Calu3 (cell line): ENCODE measurements at regions of chr3 and their contacts with region 1.

Region 1: DNA sequence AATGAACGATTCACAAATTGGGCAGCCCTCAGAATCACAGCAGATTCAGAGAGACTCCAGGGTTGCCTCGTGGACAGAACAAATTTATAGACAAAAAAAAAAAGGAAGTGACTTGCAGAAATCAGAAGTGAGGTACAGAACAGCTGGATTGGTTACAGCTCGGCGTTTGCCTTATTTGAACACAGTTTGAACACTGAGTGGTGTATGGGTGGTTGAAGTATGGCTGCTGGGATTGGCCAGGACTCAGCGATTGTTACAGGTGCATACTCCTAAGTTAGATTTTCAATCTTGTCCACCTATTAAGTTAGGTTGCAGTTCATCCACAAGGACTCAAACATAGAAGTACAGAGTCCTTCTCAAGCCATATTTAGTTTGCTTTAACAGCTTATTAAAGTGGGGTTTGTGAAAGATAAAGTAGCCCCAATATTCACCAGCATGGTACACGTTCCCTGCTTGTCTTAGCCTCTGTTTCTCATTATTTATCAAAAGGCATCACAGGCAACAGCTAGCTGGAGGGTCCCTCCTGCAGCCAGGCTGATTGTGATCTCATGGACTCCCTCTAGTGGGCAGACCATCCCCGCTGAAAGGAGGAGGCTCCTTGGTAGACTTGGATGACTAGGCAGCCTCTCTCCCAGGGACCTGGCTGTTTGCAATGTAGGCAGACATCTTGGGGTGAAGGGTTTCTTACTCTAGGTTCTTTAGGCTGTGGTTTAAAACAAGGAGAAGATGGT is 17.6 kb upstream of the ALDH1L1 start:
- DNase-seq: peak; percentile 89
- H3K4me3 Mint-ChIP-seq: no peak overlapping the region
- H3K27ac Mint-ChIP-seq: no peak overlapping the region
- H3K4me1 Mint-ChIP-seq: peaks cover 15% of the 10 kb centered on the region
- H3K27me3 Mint-ChIP-seq: no peaks in the 10 kb centered on the region
- CTCF ChIP-seq: peak; percentile 80

Region 2: DNA sequence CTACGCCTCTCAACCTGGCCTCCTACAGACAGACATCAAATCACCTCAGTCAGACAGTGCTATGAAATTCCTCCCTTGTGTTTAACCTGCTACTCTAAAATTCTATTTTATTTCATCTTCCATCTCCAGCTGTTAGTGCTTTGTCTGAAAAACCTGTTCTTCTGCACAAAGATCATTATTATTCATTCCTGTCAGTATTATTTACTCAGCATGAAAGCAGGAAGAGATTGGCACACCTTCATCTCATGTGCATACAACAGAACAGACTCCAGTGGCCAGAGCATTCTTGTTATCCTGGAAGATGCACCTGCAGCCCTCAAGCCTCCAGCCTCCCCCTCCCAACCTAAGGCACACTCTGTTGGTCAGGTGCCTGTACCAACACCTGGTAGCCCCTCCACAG is 230.9 kb before region 1 on chr3:
- CTCF ChIA-PET with region 1: no interaction called
- intact Hi-C with region 1: loop called (anchors 10 kb)
- DNase-seq: no peak
- H3K4me3 Mint-ChIP-seq: no peak overlapping the region
- H3K27ac Mint-ChIP-seq: no peak overlapping the region
- H3K4me1 Mint-ChIP-seq: no peaks in the 10 kb centered on the region
- H3K27me3 Mint-ChIP-seq: peaks cover 15% of the 10 kb centered on the region
- CTCF ChIP-seq: no peak

Region 3: GRCh38 chr3:126314790-126315658 is 117.0 kb after region 1 on chr3:
- CTCF ChIA-PET with region 1: no interaction called
- intact Hi-C with region 1: no loop called
- DNase-seq: no peak
- H3K4me3 Mint-ChIP-seq: no peak overlapping the region
- H3K27ac Mint-ChIP-seq: no peak overlapping the region
- H3K4me1 Mint-ChIP-seq: no peaks in the 10 kb centered on the region
- H3K27me3 Mint-ChIP-seq: peaks cover 47% of the 10 kb centered on the region
- CTCF ChIP-seq: no peak

Region 4: DNA sequence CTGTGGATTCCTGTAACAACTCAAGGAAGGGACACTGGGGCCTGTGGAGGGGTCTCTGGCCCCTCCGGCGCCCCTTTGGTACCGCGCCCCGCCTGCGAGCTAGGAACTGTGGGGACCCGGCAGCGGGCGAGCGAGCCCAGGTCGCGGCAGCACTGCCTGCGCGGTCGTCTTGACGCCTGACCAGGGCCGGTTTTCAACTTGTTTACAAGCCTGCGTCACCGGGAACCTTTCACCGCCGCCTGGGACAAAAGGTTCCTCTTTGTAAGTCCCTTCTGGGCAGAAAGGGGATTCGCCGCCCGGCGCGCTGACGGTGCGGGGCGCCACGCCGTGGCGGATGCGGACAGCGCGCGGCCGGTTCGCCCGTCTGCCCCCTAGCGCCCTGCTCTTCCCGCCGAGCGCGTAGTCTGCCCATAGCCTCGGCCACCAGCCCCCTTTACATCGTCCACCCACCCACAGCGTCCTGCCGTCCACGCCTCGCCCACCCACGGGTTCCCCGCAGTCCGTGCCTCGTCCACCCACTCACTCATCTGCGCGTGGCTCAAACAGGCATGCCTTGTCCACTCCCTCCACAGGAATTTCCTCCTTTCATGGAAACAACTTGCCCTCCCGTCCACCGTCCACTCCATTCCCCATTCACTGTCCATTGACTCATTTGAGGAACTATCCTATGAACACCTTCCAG is 191.2 kb after region 1 on chr3:
- CTCF ChIA-PET with region 1: interaction called, 3 read pairs
- intact Hi-C with region 1: loop called (anchors 1 kb)
- DNase-seq: peak; percentile 96
- H3K4me3 Mint-ChIP-seq: peak overlapping the region; percentile 71
- H3K27ac Mint-ChIP-seq: peak overlapping the region; percentile 90
- H3K4me1 Mint-ChIP-seq: peaks cover 18% of the 10 kb centered on the region
- H3K27me3 Mint-ChIP-seq: peaks cover 48% of the 10 kb centered on the region
- CTCF ChIP-seq: peak; percentile 98

Region 5: GRCh38 chr3:126442094-126442855 is 244.3 kb after region 1 on chr3:
- CTCF ChIA-PET with region 1: no interaction called
- intact Hi-C with region 1: no loop called
- DNase-seq: no peak
- H3K4me3 Mint-ChIP-seq: no peak overlapping the region
- H3K27ac Mint-ChIP-seq: no peak overlapping the region
- H3K4me1 Mint-ChIP-seq: peaks cover 10% of the 10 kb centered on the region
- H3K27me3 Mint-ChIP-seq: no peaks in the 10 kb centered on the region
- CTCF ChIP-seq: no peak

Region 6: DNA sequence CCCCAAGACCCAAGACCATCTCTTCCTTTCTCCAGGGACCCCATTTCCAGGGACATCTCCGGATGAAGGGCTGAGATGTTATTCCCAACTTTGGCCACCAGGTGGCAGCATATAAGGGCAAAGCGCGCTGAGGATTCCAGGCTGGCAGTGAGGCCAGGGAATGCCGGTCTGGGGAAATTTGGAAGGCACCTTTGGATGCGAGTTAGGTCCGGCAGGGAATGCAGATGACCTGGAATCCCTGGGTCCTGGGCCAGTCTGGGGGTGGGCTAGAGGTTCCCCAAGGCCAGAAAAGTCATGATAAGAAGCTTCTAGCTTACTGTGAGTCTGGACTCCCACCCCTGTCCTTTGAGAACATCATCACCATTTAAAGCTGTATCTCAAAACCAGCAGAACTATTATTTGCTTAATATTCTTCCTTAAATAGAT is 324.4 kb after region 1 on chr3:
- CTCF ChIA-PET with region 1: no interaction called
- intact Hi-C with region 1: no loop called
- DNase-seq: peak; percentile 82
- H3K4me3 Mint-ChIP-seq: no peak overlapping the region
- H3K27ac Mint-ChIP-seq: no peak overlapping the region
- H3K4me1 Mint-ChIP-seq: no peaks in the 10 kb centered on the region
- H3K27me3 Mint-ChIP-seq: peaks cover 80% of the 10 kb centered on the region
- CTCF ChIP-seq: peak; percentile 98

Region 7: DNA sequence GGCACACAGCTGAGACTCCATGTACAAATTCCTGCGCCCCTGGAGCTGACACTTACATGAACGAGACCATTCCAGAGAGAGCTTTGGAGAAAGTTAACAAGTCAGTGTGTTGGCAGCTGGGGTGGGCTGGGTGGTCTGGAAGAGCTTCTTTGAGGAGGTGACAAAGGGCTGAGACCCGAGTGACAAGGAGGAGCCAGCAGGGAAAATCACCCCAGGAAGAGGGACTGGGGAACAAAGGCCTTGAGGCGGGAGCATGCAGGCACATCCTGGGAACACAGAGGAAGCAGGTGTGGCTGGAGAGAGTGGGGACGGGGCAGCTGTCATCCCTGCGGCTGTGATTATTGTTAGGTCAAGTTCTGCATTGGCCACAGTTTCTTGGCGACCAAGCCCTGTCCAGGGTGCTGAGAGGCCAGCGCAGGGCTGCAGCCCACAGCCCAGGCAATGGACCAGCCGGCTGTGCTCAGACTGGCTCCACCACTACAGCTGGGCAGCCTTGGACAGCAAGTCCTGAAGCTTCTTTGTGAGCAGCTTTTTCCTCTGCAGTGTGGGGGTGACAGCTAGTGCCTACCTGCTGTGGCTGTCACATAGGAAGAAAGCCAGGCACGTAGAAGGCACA is 960.7 kb after region 1 on chr3:
- CTCF ChIA-PET with region 1: no interaction called
- intact Hi-C with region 1: no loop called
- DNase-seq: peak; percentile 64
- H3K4me3 Mint-ChIP-seq: no peak overlapping the region
- H3K27ac Mint-ChIP-seq: no peak overlapping the region
- H3K4me1 Mint-ChIP-seq: no peaks in the 10 kb centered on the region
- H3K27me3 Mint-ChIP-seq: no peaks in the 10 kb centered on the region
- CTCF ChIP-seq: no peak